GM23248 (cell line): ENCODE measurements at regions of chr20 and their contacts with region 1.

Region 1: GRCh38 chr20:57089691-57090150 is 176.7 kb downstream of the BMP7 start:
- DNase-seq: peak; percentile 63
- H3K4me3 ChIP-seq: no peak overlapping the region
- H3K27ac ChIP-seq: no peak overlapping the region
- H3K4me1 ChIP-seq: no peaks in the 10 kb centered on the region
- H3K27me3 ChIP-seq: peaks cover 10% of the 10 kb centered on the region; the same call in 1 of the 2 replicates

Region 2: GRCh38 chr20:57342829-57343228 is 253.1 kb after region 1 on chr20:
- in situ Hi-C with region 1: loop called (anchors 5 kb)
- DNase-seq: peak; percentile 78
- H3K4me3 ChIP-seq: no peak overlapping the region
- H3K27ac ChIP-seq: no peak overlapping the region
- H3K4me1 ChIP-seq: peaks cover 14% of the 10 kb centered on the region
- H3K27me3 ChIP-seq: peaks cover 9% of the 10 kb centered on the region; the same call in 1 of the 2 replicates

Region 3: DNA sequence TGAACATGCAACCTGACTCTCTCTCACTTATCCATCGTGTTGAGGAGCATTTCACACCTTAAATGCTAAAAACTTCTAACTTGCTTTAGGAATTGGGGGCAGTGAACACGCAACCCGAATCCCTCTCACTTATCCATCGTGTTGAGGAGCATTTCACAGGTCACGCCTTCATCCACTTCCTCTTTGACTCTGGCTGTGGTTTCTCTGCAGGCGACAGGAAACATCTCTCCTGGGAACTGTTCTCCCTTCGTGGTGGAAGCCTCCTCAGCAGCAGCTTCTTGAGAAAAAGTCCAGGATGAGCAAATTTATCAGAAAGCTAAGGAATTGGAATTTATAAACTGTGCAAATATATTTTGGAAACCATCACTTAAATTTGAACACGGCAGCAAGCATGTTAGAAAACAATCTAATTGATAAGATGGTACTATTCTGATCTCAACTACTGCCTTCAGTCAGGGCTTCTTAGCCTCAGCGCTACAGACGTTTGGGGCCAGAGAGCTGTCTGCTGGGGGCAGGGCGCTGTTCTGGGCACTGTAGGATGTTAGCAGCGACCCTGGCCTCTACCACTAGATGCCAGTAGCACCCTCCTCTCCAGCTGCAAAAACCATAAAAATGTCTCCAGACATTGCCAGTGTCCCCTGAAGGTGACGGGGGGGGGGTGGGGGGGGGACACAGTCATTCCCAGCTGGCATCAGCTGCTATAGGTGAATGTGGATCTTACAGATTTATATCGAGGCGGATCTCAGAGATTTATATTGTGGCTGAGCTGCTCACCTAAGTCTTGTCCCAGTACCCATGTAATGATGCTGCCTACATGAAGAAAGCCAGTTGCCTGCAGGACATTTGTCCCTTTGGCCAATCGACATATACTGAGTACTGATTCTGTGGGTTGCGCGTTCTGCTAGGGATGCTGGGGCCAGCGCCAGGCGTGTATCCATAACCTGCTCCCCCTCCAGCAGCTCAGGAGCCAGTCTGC is 409.0 kb after region 1 on chr20:
- in situ Hi-C with region 1: loop called (anchors 25 kb)
- DNase-seq: peak; percentile 50
- H3K4me3 ChIP-seq: no peak overlapping the region
- H3K27ac ChIP-seq: no peak overlapping the region
- H3K4me1 ChIP-seq: peaks cover 5% of the 10 kb centered on the region
- H3K27me3 ChIP-seq: peaks cover 20% of the 10 kb centered on the region

Region 4: GRCh38 chr20:58209652-58210397 is 1120.1 kb after region 1 on chr20:
- in situ Hi-C with region 1: loop called (anchors 25 kb)
- DNase-seq: peak; percentile 86
- H3K4me3 ChIP-seq: no peak overlapping the region
- H3K27ac ChIP-seq: no peak overlapping the region
- H3K4me1 ChIP-seq: no peaks in the 10 kb centered on the region
- H3K27me3 ChIP-seq: peaks cover 19% of the 10 kb centered on the region